Transverse colon (tissue), 4 donors: ENCODE measurements at regions of chr3 and their contacts with region 1.

Region 1: GRCh38 chr3:186021673-186022362 is 84.0 kb upstream of the TRA2B start:
- DNase-seq: no peak
- H3K4me3 ChIP-seq: no peak overlapping the region
- H3K27ac ChIP-seq: no peak overlapping the region
- H3K4me1 ChIP-seq: no peaks in the 10 kb centered on the region
- H3K27me3 ChIP-seq: no peaks in the 10 kb centered on the region
- CTCF ChIP-seq: no peak
- EP300 ChIP-seq: no peak
- POLR2A ChIP-seq: no peak

Region 2: DNA sequence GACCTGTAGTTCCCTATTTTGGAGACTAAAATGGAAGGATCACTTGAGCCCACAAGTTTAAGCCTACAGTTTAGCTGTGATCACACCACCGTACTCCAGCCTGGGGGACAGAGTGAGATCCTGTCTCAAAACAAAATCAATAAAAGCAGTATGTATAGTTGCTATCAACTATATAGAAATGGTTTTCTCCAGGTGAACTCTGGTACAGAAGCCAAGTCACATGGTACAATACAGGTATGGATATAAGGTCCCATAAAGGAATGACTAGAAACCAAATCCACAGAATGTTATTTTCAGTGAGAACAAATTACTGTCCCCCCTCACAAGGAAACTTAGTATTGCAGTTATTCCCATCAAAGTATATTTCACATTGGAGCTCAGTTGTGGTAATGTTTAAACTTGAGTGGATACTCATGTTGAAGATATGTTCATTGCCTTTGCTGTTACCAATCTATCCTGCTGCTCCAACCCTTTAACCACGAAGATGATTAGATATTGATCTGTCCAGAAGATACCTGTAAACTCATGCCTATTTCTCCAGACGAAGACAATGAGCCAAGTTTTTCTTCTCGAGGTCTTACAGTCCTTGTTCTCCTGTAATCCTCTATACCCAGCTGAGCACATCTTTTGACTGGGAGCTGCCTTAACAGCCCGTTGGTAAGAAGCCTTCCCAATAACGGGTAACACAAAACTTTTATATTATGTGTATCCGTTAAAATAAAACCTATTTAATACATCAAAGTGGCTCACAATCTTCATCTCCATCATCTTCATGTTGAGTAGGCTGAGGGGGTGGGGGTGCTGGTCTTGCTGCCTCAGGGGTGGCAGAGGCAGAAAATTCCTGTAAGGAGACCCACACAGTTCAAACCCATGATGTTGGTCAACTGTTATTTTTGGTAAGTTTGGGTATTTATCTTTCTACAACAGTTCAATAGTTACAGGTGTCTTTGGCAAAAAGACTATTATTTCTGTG is 108.6 kb before region 1 on chr3:
- in situ Hi-C with region 1: no loop called
- intact Hi-C with region 1: no loop called
- DNase-seq: no peak
- H3K4me3 ChIP-seq: no peak overlapping the region
- H3K27ac ChIP-seq: no peak overlapping the region
- H3K4me1 ChIP-seq: no peaks in the 10 kb centered on the region
- H3K27me3 ChIP-seq: no peaks in the 10 kb centered on the region
- CTCF ChIP-seq: no peak
- EP300 ChIP-seq: no peak
- POLR2A ChIP-seq: no peak

Region 3: GRCh38 chr3:186057594-186057993 is 35.8 kb after region 1 on chr3:
- in situ Hi-C with region 1: no loop called
- intact Hi-C with region 1: loop called (anchors 1 kb)
- DNase-seq: no peak
- H3K4me3 ChIP-seq: no peak overlapping the region
- H3K27ac ChIP-seq: no peak overlapping the region
- H3K4me1 ChIP-seq: peaks cover 0 to 16% (median 9%) of the 10 kb centered on the region in 4 donors
- H3K27me3 ChIP-seq: no peaks in the 10 kb centered on the region
- CTCF ChIP-seq: no peak
- EP300 ChIP-seq: no peak
- POLR2A ChIP-seq: no peak

Region 4: DNA sequence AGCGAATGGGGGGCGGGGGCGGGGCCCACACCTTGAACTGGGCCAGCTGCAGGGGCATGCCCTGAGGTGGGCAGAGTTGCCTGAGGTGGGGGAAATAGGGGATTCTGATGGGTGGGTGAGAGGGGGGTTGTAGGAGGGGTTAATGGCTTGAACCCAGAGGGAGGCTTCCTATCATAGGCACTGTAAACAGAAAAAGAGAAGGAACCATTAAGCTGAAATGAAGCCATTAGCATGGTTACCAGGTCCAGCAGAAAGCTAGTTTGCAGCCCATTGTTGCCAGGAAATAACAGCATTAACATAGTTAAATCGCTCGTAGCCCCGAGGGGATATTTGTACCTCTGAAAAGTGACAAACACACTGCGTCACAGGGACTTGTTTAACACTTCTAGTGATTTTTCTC is 58.1 kb after region 1 on chr3:
- in situ Hi-C with region 1: no loop called
- intact Hi-C with region 1: no loop called
- DNase-seq: no peak
- H3K4me3 ChIP-seq: no peak overlapping the region
- H3K27ac ChIP-seq: no peak overlapping the region
- H3K4me1 ChIP-seq: no peaks in the 10 kb centered on the region
- H3K27me3 ChIP-seq: no peaks in the 10 kb centered on the region
- CTCF ChIP-seq: no peak
- EP300 ChIP-seq: no peak
- POLR2A ChIP-seq: no peak